Activated CD8-positive, alpha-beta T cell treated with anti-CD3 and anti-CD28 coated beads for 36 hours (primary cell): ENCODE measurements at regions of chr15 and their contacts with region 1.

Region 1: GRCh38 chr15:72722071-72722696 is 36.2 kb downstream of the BBS4 start:
- DNase-seq: peak; percentile 81
- ATAC-seq: peak; percentile 65
- H3K4me3 Mint-ChIP-seq: no peak overlapping the region
- H3K27ac Mint-ChIP-seq: no peak overlapping the region
- H3K4me1 Mint-ChIP-seq: no peaks in the 10 kb centered on the region
- H3K27me3 Mint-ChIP-seq: no peaks in the 10 kb centered on the region
- CTCF ChIP-seq: peak; percentile 81

Region 2: GRCh38 chr15:72732516-72732915 is 10.3 kb after region 1 on chr15:
- CTCF ChIA-PET with region 1: interaction called, 69 read pairs
- POLR2A ChIA-PET with region 1: no interaction called
- intact Hi-C with region 1: no loop called
- DNase-seq: no peak
- ATAC-seq: no peak
- H3K4me3 Mint-ChIP-seq: no peak overlapping the region
- H3K27ac Mint-ChIP-seq: no peak overlapping the region
- H3K4me1 Mint-ChIP-seq: no peaks in the 10 kb centered on the region
- H3K27me3 Mint-ChIP-seq: no peaks in the 10 kb centered on the region
- CTCF ChIP-seq: no peak

Region 3: GRCh38 chr15:72751751-72752455 is 29.7 kb after region 1 on chr15:
- CTCF ChIA-PET with region 1: interaction called, 21 read pairs
- POLR2A ChIA-PET with region 1: interaction called, 3 read pairs
- intact Hi-C with region 1: no loop called
- DNase-seq: peak; percentile 8
- ATAC-seq: no peak
- H3K4me3 Mint-ChIP-seq: no peak overlapping the region
- H3K27ac Mint-ChIP-seq: peak overlapping the region; percentile 2
- H3K4me1 Mint-ChIP-seq: peaks cover 23% of the 10 kb centered on the region
- H3K27me3 Mint-ChIP-seq: no peaks in the 10 kb centered on the region
- CTCF ChIP-seq: no peak

Region 4: GRCh38 chr15:72774696-72775383 is 52.7 kb after region 1 on chr15:
- CTCF ChIA-PET with region 1: interaction called, 19 read pairs
- POLR2A ChIA-PET with region 1: no interaction called
- intact Hi-C with region 1: no loop called
- DNase-seq: no peak
- ATAC-seq: no peak
- H3K4me3 Mint-ChIP-seq: no peak overlapping the region
- H3K27ac Mint-ChIP-seq: peak overlapping the region; percentile 27
- H3K4me1 Mint-ChIP-seq: peaks cover 49% of the 10 kb centered on the region
- H3K27me3 Mint-ChIP-seq: no peaks in the 10 kb centered on the region
- CTCF ChIP-seq: no peak

Region 5: GRCh38 chr15:72820278-72820677 is 98.1 kb after region 1 on chr15:
- CTCF ChIA-PET with region 1: no interaction called
- POLR2A ChIA-PET with region 1: no interaction called
- intact Hi-C with region 1: no loop called
- DNase-seq: no peak
- ATAC-seq: no peak
- H3K4me3 Mint-ChIP-seq: no peak overlapping the region
- H3K27ac Mint-ChIP-seq: no peak overlapping the region
- H3K4me1 Mint-ChIP-seq: no peaks in the 10 kb centered on the region
- H3K27me3 Mint-ChIP-seq: peaks cover 9% of the 10 kb centered on the region
- CTCF ChIP-seq: no peak

Region 6: GRCh38 chr15:73081321-73081958 is 359.3 kb after region 1 on chr15:
- CTCF ChIA-PET with region 1: interaction called, 20 read pairs
- POLR2A ChIA-PET with region 1: no interaction called
- intact Hi-C with region 1: no loop called
- DNase-seq: peak; percentile 8
- ATAC-seq: no peak
- H3K4me3 Mint-ChIP-seq: no peak overlapping the region
- H3K27ac Mint-ChIP-seq: no peak overlapping the region
- H3K4me1 Mint-ChIP-seq: no peaks in the 10 kb centered on the region
- H3K27me3 Mint-ChIP-seq: peaks cover 3% of the 10 kb centered on the region
- CTCF ChIP-seq: peak; percentile 70